H1 (cell line): ENCODE measurements at regions of chr1 and their contacts with region 1.

Region 1: DNA sequence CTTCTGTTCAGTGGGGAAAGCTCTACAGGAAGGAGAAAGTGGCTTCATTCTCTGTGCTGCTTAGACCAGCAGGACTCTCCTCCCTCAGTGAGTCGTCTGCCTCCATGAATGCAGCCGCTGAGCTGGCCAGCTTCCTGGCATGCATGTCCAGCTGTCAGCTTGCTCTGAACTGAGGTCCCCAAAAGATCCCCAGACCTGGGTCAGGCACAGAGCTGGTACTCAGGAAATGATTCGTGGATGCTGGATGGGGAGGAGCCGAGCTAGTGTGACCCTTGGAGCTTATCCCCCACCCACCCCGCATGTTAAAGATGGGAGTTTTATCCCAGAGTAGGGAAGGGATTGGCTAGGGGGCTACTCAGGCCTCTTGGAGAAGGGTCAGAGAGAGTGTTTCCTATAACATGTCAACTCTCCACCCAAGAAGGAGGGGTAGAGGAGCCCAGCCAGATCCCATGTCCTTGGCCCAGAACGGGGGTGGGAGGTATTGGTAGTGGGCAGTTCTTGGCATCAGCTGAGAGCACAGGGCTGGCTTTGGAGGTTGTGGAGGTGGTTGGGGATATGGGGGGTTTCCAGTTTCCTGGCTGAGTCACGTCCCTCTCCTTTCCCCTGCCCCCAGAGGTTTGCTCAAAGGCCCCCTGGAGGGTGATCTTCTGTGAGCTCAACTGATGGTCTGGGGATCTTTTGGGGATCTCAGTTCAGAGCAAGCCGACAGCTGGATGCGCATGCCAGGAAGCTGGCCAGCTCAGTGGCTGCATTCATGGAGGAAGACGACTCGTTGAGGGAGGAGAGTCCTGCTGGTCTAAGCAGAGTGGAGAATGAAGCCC is 110.1 kb downstream of the FOXD2 start:
- DNase-seq: no peak
- H3K4me3 ChIP-seq: no peak overlapping the region
- H3K27ac ChIP-seq: no peak overlapping the region
- H3K4me1 ChIP-seq: peaks cover 0 to 11% (median 5%) of the 10 kb centered on the region in 4 experiments; a peak in 6 of 7 replicates
- H3K27me3 ChIP-seq: peaks cover 0 to 2% (median 0%) of the 10 kb centered on the region in 4 experiments; a peak in 3 of 7 replicates
- CTCF ChIP-seq: no peak
- EP300 ChIP-seq: no peak
- POLR2A ChIP-seq: no peak
- RAD21 ChIP-seq: no peak

Region 2: DNA sequence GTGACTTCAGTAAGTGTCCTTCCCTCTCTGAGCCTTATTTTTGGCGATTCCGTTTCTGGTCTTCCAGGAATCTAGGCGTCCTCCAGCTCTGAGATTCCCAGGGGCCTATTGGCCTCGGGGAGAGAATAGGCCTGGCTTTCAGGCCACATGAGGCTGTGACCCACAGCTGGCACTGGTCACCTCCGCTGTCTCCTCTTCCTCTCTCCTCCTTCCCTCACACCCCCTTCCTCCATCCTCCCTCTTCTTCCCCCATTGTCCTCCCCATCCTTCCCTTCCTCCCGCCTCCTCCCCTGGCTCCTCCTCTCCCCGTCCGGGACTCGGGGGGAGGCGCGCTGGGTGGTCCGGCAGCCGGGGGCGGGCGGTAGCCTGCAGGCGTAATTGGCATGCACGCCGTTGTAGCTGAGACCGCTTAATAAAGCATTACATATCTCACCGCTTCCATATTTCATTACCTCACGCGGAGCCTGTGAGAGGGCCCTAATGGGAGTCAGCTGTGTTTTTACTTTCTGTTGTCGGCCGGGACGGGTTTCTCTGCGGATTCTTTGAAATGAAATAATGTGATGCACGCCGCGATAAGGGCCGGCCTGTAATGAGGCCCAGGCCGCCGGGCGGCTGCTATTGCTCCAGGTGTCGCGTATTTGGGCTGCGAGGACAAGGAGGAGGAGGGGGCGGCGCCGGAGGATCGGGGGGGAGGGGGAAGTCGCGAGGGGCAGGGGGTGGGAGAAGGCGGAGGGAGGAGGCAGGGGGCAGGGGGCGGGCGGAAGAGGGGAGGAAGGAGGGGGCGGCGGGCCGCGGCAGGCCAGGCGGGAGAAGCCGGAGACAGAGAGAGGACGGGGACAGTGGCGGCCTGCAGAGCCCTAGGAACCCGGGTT is 14.8 kb before region 1 on chr1:
- CTCF ChIA-PET with region 1: interaction called, 43 read pairs
- POLR2A ChIA-PET with region 1: interaction called, 3 read pairs
- DNase-seq: peak in 1 of 2 experiments; percentile 84
- H3K4me3 ChIP-seq: peak overlapping the region; percentile 48 to 67 (median 58)
- H3K27ac ChIP-seq: no peak overlapping the region
- H3K4me1 ChIP-seq: peaks cover 3 to 10% (median 7%) of the 10 kb centered on the region in 4 experiments
- H3K27me3 ChIP-seq: peaks cover 0 to 7% (median 4%) of the 10 kb centered on the region in 4 experiments; a peak in 2 of 7 replicates
- CTCF ChIP-seq: 0 out of 4 replicates have a peak, but pooled peaks of 1 of the 3 experiments have one; percentile 2
- EP300 ChIP-seq: no peak
- POLR2A ChIP-seq: no peak
- RAD21 ChIP-seq: no peak

Region 3: GRCh38 chr1:47569681-47570470 is 21.9 kb after region 1 on chr1:
- CTCF ChIA-PET with region 1: interaction called, 14 read pairs
- POLR2A ChIA-PET with region 1: interaction called, 3 read pairs
- DNase-seq: no peak
- H3K4me3 ChIP-seq: no peak overlapping the region
- H3K27ac ChIP-seq: no peak overlapping the region
- H3K4me1 ChIP-seq: peaks cover 6 to 21% (median 16%) of the 10 kb centered on the region in 4 experiments
- H3K27me3 ChIP-seq: peaks cover 0 to 3% (median 2%) of the 10 kb centered on the region in 4 experiments; a peak in 2 of 7 replicates
- CTCF ChIP-seq: peak in 2 of 3 experiments; percentile 38 to 54; a peak in 3 of 4 replicates
- EP300 ChIP-seq: no peak
- POLR2A ChIP-seq: no peak
- RAD21 ChIP-seq: peak in 1 of 2 experiments; percentile 46; a peak in 3 of 4 replicates

Region 4: DNA sequence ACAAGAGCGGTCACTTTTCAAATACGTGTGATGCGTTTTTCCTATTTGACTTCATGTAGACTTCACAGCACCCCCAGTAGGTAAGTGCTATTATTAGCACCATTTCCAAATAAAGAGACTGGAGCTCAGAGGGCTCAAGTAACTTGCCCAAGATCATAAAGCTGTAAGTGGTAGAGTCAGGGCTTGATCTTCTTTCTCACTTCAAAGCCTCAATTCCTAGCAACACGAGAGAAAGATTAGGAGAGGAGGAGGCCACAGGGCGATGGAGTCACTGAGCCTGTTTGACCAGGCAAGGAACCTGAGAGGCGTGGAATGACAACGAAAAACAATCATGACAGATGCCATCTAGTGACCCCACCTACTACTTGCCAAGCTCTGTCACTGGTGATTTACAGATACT is 70.9 kb after region 1 on chr1:
- CTCF ChIA-PET with region 1: interaction called, 13 read pairs
- POLR2A ChIA-PET with region 1: interaction called, 3 read pairs
- DNase-seq: peak in 1 of 2 experiments; percentile 28
- H3K4me3 ChIP-seq: no peak overlapping the region
- H3K27ac ChIP-seq: no peak overlapping the region
- H3K4me1 ChIP-seq: no peaks in the 10 kb centered on the region
- H3K27me3 ChIP-seq: no peaks in the 10 kb centered on the region; a peak in 3 of 7 replicates
- CTCF ChIP-seq: no peak
- EP300 ChIP-seq: no peak
- POLR2A ChIP-seq: no peak
- RAD21 ChIP-seq: no peak

Region 5: DNA sequence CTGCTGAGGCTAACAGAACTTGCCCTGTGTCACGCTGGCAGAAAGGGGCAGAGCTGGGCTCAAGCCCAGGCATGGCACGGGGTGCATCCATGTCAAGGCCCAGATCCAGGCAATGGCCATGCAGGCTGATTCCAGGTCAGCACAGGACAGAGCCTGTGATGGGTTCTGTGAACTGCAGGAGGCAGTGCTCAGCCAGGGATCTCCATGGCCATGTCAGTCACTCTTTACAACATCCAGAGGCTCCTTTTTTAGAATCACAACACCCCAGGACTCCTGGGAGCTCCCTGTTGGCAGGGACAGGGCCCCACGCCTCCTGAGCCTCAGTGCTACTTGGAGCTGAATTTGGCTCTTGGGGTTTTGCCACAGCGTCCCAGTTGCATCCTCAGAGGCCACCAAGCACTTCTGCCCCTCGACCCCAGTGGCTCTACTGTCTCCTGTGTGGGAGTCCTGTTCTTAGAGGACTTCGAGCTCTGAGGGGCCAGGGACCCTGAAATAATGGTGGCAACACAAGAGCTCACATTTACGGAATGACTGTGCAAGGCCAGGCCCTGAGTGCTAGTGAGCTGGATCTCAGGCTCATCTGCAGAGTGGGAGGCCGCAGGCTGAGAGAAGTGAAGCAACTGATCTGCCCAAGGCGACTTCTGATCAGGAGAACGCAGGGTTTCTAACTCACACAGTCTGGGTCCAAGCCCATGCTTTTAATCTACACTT is 237.8 kb after region 1 on chr1:
- CTCF ChIA-PET with region 1: no interaction called
- POLR2A ChIA-PET with region 1: no interaction called
- DNase-seq: peak; percentile 10 to 53
- H3K4me3 ChIP-seq: no peak overlapping the region
- H3K27ac ChIP-seq: no peak overlapping the region
- H3K4me1 ChIP-seq: peaks cover 0 to 3% (median 0%) of the 10 kb centered on the region in 4 experiments; a peak in 3 of 7 replicates
- H3K27me3 ChIP-seq: no peaks in the 10 kb centered on the region
- CTCF ChIP-seq: peak; percentile 74 to 84 (median 75)
- EP300 ChIP-seq: no peak
- POLR2A ChIP-seq: no peak
- RAD21 ChIP-seq: peak; percentile 81 to 88

Region 6: GRCh38 chr1:47997289-47998200 is 449.6 kb after region 1 on chr1 and contains the start of gene TRABD2B:
- CTCF ChIA-PET with region 1: no interaction called
- POLR2A ChIA-PET with region 1: no interaction called
- DNase-seq: peak; percentile 63 to 95
- H3K4me3 ChIP-seq: peak within 1 kb of the TSS; percentile 39 to 86 (median 62)
- H3K27ac ChIP-seq: no peak within 1 kb of the TSS
- H3K4me1 ChIP-seq: peaks cover 5 to 17% (median 13%) of the 10 kb centered on the region in 4 experiments
- H3K27me3 ChIP-seq: peaks cover 0 to 30% (median 25%) of the 10 kb centered on the region in 4 experiments; a peak in 6 of 7 replicates
- CTCF ChIP-seq: peak; percentile 81 to 97 (median 86)
- EP300 ChIP-seq: no peak
- POLR2A ChIP-seq: no peak; a peak in 1 of 3 replicates
- RAD21 ChIP-seq: peak; percentile 79 to 90
- total RNA-seq, gene TRABD2B: 3.4 and 3.5 TPM in 2 replicates